H1 (cell line): ENCODE measurements at regions of chr2 and their contacts with region 1.

Region 1: GRCh38 chr2:20378792-20379519 is 28.3 kb upstream of the PUM2 start:
- DNase-seq: peak; percentile 34 to 86
- H3K4me3 ChIP-seq: no peak overlapping the region
- H3K27ac ChIP-seq: no peak overlapping the region
- H3K4me1 ChIP-seq: peaks cover 0 to 5% (median 2%) of the 10 kb centered on the region in 4 experiments; a peak in 5 of 7 replicates
- H3K27me3 ChIP-seq: no peaks in the 10 kb centered on the region
- CTCF ChIP-seq: peak; percentile 77 to 87 (median 85)
- EP300 ChIP-seq: no peak
- POLR2A ChIP-seq: no peak
- RAD21 ChIP-seq: peak; percentile 81 to 85

Region 2: DNA sequence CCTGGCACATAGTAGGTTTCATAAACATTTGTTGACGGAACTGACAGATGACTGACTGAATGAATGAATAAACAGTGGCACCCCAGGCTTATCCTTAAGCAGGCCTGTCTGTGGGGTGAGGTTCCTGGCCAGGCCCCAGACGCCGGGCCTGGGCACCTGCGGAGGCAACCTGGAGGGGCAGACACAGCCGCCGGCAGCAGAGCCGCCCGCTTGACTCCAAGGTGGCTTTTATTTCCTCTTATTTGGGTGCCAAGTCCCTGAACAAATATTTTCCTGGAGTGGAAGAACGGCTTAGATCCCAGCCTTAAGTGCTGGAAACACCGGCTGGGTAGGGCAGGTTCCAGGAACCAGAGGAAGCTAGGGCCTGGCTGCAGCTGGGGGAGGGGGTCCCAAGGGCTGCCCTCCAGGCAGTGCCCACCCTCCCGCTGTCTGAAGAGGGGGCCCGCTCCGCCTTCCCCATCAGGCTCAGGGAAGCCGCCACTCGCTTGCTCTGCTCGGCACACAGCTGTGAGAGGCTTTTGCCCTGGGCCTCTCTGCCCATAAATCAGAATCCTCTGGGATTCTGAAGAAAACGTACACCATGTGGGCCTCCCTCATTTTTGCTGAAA is 182.3 kb before region 1 on chr2:
- CTCF ChIA-PET with region 1: no interaction called
- POLR2A ChIA-PET with region 1: no interaction called
- DNase-seq: no peak
- H3K4me3 ChIP-seq: no peak overlapping the region
- H3K27ac ChIP-seq: no peak overlapping the region
- H3K4me1 ChIP-seq: peaks cover 0 to 5% (median 0%) of the 10 kb centered on the region in 4 experiments; a peak in 1 of 7 replicates
- H3K27me3 ChIP-seq: no peaks in the 10 kb centered on the region
- CTCF ChIP-seq: no peak
- EP300 ChIP-seq: no peak
- POLR2A ChIP-seq: no peak
- RAD21 ChIP-seq: no peak

Region 3: DNA sequence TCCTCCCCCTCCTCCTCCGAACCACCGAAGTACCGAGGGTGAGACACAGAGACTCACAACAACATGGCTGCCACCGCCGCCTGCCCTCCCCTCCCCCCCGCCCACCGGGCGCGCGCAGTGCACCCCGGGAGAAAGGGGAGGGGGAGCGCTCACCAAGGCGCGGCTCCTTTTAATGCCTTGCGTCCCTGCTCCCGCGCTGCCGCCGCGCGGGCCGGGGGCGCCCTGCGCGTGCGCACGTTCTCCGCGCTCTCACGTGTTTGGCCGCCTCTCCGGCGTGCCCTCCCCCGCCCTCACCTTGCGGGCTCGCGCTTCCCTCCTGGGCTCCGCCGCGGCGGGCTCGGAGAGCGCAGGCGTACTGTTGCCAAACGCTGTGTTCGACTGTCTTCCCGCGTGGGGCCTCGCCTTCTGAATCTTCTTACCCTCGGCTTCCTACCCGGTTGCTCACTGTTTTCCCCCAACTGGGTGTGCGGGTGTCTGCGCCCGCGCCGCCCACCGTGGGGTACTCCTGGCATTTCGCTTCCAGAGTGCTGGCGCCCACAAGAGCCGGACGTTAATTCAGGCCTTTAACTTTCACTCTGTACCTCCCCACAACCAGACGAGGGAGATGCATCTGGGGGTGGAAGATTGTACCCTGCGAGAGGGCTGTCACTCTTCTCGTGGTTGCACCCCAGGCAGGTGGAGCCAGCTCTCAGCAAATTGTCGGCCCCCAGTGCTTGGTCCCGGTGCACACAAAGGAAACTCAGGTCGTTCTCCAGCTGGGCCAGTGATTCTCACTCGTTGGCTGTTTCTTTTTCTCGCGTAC is 28.0 kb before region 1 on chr2 and contains the start of gene PUM2:
- CTCF ChIA-PET with region 1: interaction called, 24 read pairs
- POLR2A ChIA-PET with region 1: interaction called, 3 read pairs
- DNase-seq: peak; percentile 89 to 90
- H3K4me3 ChIP-seq: peak within 1 kb of the TSS; percentile 84 to 100 (median 92)
- H3K27ac ChIP-seq: peak within 1 kb of the TSS; percentile 100
- H3K4me1 ChIP-seq: peaks cover 5 to 15% (median 12%) of the 10 kb centered on the region in 4 experiments
- H3K27me3 ChIP-seq: no peaks in the 10 kb centered on the region
- CTCF ChIP-seq: no peak
- EP300 ChIP-seq: no peak; a peak in 1 of 3 replicates
- POLR2A ChIP-seq: peak; percentile 73 to 84; a peak in 2 of 3 replicates
- RAD21 ChIP-seq: no peak
- total RNA-seq, gene PUM2: 109 and 114 TPM in 2 replicates

Region 4: GRCh38 chr2:20398956-20399567 is 20.1 kb after region 1 on chr2:
- CTCF ChIA-PET with region 1: interaction called, 15 read pairs
- POLR2A ChIA-PET with region 1: interaction called, 3 read pairs
- DNase-seq: no peak
- H3K4me3 ChIP-seq: no peak overlapping the region
- H3K27ac ChIP-seq: no peak overlapping the region
- H3K4me1 ChIP-seq: no peaks in the 10 kb centered on the region
- H3K27me3 ChIP-seq: no peaks in the 10 kb centered on the region
- CTCF ChIP-seq: no peak
- EP300 ChIP-seq: no peak
- POLR2A ChIP-seq: no peak
- RAD21 ChIP-seq: no peak

Region 5: DNA sequence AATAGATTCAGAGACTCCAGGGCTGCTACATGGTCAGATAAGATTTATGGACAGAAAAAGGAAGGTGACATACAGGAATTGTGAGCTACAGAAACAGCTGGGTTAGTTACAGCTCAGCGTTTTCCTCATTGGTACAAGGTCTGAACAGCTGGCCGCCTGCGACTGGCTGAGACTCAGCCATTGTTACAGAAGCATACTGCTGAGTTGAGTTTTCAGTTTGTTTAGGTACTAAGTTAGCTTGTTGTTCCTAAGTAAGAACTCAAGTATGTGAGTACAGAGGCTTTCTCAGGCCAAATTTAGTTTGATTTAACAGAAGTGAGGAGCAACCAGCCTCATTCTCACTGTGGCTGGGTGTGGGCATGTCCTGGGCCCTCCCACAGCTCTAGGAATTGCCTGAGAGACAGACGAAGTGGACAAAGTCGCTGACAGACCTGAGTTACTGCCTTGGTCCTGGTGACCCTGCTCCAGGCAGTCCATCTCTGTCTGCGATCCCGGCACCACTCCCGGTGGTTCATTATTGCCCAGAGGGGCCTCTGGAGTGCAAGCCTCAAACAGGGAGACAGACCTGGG is 40.1 kb after region 1 on chr2:
- CTCF ChIA-PET with region 1: interaction called, 132 read pairs
- POLR2A ChIA-PET with region 1: no interaction called
- DNase-seq: no peak
- H3K4me3 ChIP-seq: no peak overlapping the region
- H3K27ac ChIP-seq: no peak overlapping the region
- H3K4me1 ChIP-seq: peaks cover 0 to 4% (median 2%) of the 10 kb centered on the region in 4 experiments; a peak in 2 of 7 replicates
- H3K27me3 ChIP-seq: no peaks in the 10 kb centered on the region
- CTCF ChIP-seq: no peak
- EP300 ChIP-seq: no peak
- POLR2A ChIP-seq: no peak
- RAD21 ChIP-seq: no peak

Region 6: DNA sequence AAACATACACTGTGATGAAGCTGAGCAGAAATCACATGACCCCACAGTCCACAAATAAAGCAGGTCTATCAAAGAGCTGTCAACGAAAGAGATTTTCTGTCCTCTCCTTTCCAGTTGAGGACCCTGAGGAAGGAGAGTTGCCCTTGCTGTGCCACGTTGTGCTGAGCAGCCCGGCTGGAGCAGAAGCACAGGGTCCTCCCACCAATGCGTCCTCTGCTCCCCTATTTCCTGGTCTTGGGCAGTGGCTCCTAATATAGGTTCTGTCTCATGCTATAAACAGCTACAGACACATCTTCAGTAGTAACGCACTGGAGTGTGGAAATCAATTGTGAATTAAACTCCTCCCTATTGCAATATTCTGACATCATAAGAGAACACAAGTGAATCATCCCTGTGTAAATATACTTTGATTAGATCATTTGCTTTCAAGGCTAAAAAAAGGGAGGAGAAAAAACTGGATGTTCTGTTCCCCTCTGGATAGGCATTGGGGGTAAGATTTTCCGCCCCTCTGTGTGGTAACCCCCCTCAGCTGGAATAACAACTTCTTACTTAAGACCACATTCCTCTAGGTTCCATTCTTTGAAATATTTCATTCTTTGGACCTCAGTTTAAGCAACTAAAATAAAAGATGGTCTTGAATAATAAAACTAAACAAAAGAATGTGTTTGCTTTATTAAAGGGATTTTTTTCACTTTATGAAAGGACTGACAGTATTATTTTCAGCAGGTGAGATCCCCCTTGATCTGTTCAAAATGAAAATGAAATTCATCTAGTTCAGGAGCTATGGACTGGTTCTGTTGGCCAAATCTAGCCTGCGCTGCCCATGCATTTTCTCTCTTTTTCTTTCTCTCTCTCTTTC is 59.6 kb after region 1 on chr2:
- CTCF ChIA-PET with region 1: interaction called, 12 read pairs
- POLR2A ChIA-PET with region 1: no interaction called
- DNase-seq: no peak
- H3K4me3 ChIP-seq: no peak overlapping the region
- H3K27ac ChIP-seq: no peak overlapping the region
- H3K4me1 ChIP-seq: no peaks in the 10 kb centered on the region
- H3K27me3 ChIP-seq: no peaks in the 10 kb centered on the region
- CTCF ChIP-seq: no peak
- EP300 ChIP-seq: no peak
- POLR2A ChIP-seq: no peak
- RAD21 ChIP-seq: no peak

Region 7: GRCh38 chr2:20650880-20651730 is 272.1 kb after region 1 on chr2 and contains the start of gene HS1BP3:
- CTCF ChIA-PET with region 1: interaction called, 17 read pairs
- POLR2A ChIA-PET with region 1: no interaction called
- DNase-seq: peak in 1 of 2 experiments; percentile 91
- H3K4me3 ChIP-seq: peak within 1 kb of the TSS; percentile 47 to 68 (median 56)
- H3K27ac ChIP-seq: no peak within 1 kb of the TSS
- H3K4me1 ChIP-seq: peaks cover 0 to 11% (median 7%) of the 10 kb centered on the region in 4 experiments; a peak in 5 of 7 replicates
- H3K27me3 ChIP-seq: peaks cover 0 to 4% (median under 1%) of the 10 kb centered on the region in 4 experiments; a peak in 4 of 7 replicates
- CTCF ChIP-seq: peak in 2 of 3 experiments; percentile 87 to 92; a peak in 3 of 4 replicates
- EP300 ChIP-seq: peak in 1 of 2 experiments; percentile 60; a peak in 1 of 3 replicates
- POLR2A ChIP-seq: peak in 1 of 2 experiments; percentile 74; a peak in 2 of 3 replicates
- RAD21 ChIP-seq: peak; percentile 49 to 76
- total RNA-seq, gene HS1BP3: 11.1 and 11.2 TPM in 2 replicates